ENCODE measurements at regions of chr6 and their contacts with region 1.

Region 1: GRCh38 chr6:137224799-137225198 is 5.6 kb upstream of the IFNGR1 start:
- DNase-seq: no peak
- ATAC-seq: peak; percentile 85
- H3K4me3 Mint-ChIP-seq: peak overlapping the region; percentile 35
- H3K27ac Mint-ChIP-seq: peak overlapping the region; percentile 85
- H3K4me1 Mint-ChIP-seq: peaks cover 71% of the 10 kb centered on the region
- H3K27me3 Mint-ChIP-seq: no peaks in the 10 kb centered on the region
- CTCF ChIP-seq: no peak

Region 2: GRCh38 chr6:137248702-137249101 is 23.9 kb after region 1 on chr6:
- CTCF ChIA-PET with region 1: no interaction called
- POLR2A ChIA-PET with region 1: interaction called, 4 read pairs
- intact Hi-C with region 1: loop called (anchors 2 kb)
- DNase-seq: no peak
- ATAC-seq: peak; percentile 97
- H3K4me3 Mint-ChIP-seq: no peak overlapping the region
- H3K27ac Mint-ChIP-seq: peak overlapping the region; percentile 63
- H3K4me1 Mint-ChIP-seq: peaks cover 16% of the 10 kb centered on the region
- H3K27me3 Mint-ChIP-seq: no peaks in the 10 kb centered on the region
- CTCF ChIP-seq: no peak

Region 3: DNA sequence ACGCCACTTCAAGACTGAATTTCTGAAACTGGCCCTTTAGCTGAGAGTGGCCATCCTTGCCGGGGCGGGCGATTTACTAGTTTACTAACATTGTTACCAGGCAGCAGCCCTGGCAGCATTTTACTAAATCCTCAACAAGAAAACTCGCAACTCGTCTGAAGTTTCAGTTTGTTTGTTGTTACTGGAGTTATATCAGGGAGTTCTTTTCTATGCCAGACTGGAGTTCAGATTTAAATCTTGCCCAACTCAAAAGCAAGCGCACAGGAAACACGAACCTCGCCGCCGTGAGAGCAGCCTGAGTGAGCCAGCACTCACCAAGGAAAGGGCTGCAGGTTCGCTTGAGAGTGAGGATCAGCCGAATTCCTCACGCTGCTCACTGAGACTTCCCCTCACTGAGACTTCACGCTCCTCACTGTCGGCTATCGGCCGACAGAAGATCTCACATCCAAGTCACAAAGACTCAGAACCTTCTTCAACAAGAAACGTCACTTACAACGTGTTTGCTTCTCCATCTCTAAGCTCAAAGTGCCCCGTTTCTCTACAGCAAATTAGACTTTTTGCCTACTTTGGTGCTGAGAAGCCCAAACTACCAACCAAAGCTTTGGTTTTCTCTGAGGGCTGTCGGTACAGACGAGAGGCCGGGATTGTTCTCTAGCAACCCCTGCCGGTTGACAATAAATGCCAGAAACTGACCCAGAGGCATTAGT is 190.5 kb after region 1 on chr6:
- CTCF ChIA-PET with region 1: no interaction called
- POLR2A ChIA-PET with region 1: no interaction called
- intact Hi-C with region 1: no loop called
- DNase-seq: peak; percentile 27
- ATAC-seq: peak; percentile 93
- H3K4me3 Mint-ChIP-seq: peak overlapping the region; percentile 84
- H3K27ac Mint-ChIP-seq: peak overlapping the region; percentile 61
- H3K4me1 Mint-ChIP-seq: peaks cover 11% of the 10 kb centered on the region
- H3K27me3 Mint-ChIP-seq: peaks cover 2% of the 10 kb centered on the region
- CTCF ChIP-seq: no peak